Activated CD8-positive, alpha-beta T cell treated with anti-CD3 and anti-CD28 coated beads for 36 hours (primary cell): ENCODE measurements at regions of chr3 and their contacts with region 1.

Region 1: DNA sequence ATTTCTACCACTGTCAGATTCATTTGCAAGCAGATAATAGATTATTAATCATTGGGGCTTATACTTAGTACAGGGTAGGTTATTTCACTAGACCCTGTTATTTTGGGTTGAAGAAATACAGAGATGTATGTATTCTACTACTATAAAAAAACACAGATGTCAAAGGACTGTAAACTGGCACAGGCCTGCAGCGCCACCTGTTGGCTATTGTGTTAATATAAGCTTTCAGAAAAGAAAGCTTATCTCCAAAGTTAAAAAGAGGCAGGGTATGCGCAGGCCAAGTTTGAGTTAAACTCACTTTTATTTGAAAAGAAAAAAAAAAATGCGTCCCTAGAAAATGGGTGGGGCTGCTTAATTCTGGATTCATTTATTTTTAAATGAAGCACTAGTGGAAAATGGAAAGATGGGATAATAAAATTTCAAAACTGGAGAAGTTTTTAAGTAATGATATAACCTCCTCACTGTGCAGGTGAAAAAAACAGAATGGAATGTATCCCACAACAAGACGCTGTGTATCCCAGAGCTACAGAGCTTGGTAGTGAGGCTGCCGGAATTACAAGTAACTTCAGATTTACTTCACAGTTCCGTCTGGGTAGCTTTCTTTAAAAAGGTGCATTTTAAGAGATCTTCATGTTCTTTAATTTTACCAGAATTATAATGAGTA is 407.2 kb upstream of the TGFBR2 start:
- DNase-seq: peak; percentile 84
- ATAC-seq: no peak
- H3K4me3 Mint-ChIP-seq: no peak overlapping the region
- H3K27ac Mint-ChIP-seq: no peak overlapping the region
- H3K4me1 Mint-ChIP-seq: no peaks in the 10 kb centered on the region
- H3K27me3 Mint-ChIP-seq: no peaks in the 10 kb centered on the region
- CTCF ChIP-seq: peak; percentile 92

Region 2: DNA sequence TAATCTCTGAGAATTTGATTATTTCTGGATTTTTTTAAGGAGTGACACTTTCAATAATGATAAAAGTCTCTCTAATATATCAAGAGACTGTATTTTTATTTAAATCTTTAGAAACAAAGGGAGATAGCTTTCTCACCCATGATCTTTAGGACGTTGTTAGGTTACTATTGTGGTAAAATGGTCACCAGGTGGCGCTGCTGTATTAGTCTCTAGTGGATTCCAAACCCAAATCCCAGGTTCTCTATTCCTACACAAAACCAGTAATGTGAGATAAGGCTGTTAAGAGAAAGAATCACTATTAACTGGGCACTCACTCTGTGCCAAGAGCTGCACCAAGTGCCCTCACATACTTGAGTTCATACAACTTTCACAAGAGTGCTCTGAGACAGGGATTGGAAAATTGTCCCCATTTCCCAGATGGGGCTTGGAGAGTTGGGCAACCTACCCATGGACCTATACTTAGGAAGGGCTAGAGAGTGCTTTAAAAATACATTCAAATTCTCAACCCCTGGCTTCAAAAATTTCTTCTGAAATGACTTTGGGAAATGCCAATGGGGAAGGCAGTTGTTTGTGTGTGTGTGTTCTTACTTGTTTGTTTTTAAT is 186.2 kb before region 1 on chr3:
- CTCF ChIA-PET with region 1: interaction called, 34 read pairs
- POLR2A ChIA-PET with region 1: no interaction called
- intact Hi-C with region 1: loop called (anchors 10 kb)
- DNase-seq: peak; percentile 74
- ATAC-seq: no peak
- H3K4me3 Mint-ChIP-seq: no peak overlapping the region
- H3K27ac Mint-ChIP-seq: no peak overlapping the region
- H3K4me1 Mint-ChIP-seq: peaks cover 6% of the 10 kb centered on the region
- H3K27me3 Mint-ChIP-seq: peaks cover 9% of the 10 kb centered on the region
- CTCF ChIP-seq: peak; percentile 78

Region 3: GRCh38 chr3:30112902-30113484 is 86.2 kb before region 1 on chr3:
- CTCF ChIA-PET with region 1: interaction called, 24 read pairs
- POLR2A ChIA-PET with region 1: no interaction called
- intact Hi-C with region 1: loop called (anchors 2 kb)
- DNase-seq: no peak
- ATAC-seq: no peak
- H3K4me3 Mint-ChIP-seq: no peak overlapping the region
- H3K27ac Mint-ChIP-seq: no peak overlapping the region
- H3K4me1 Mint-ChIP-seq: peaks cover 3% of the 10 kb centered on the region
- H3K27me3 Mint-ChIP-seq: peaks cover 1% of the 10 kb centered on the region
- CTCF ChIP-seq: peak; percentile 46

Region 4: DNA sequence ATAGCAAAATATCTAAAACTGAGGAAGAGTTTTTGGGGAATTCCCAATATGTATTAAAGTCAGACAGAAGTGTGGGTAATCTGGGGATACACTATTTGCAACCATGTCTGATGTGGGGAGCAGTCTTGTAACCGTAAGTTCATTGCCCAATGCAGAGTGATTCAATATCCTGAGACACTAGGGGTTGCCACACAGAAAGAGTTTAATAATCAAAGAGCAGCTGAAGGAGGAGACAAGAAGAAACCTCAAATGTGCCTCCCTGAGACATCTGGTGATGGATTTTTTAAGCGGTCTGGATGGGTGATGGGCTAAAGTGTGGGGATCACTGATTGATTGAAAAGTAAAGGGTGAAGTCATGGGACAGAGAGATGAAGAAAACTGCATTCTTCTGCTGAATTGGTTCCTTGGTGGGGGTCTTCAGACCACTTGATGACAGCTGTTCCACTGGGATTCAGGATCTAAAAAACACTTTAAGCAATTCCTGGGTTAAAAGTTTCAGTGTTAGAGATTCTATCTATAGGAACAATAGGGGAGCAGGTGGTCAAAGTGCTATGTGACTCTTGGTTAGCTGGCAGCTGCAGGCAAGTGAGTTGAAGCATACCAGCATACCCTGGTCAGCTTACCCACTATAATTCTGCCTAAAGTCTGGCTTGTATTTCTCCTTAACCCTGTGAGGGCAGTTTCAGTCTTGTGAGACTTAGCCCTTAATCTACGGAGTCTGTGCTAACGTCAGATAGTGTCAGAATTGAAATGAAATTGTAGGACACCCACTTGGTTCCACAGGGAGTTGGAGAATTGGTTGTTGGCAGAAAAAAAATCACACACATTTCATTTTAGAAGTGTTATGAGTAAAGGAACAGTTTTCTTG is 18.7 kb before region 1 on chr3:
- CTCF ChIA-PET with region 1: interaction called, 32 read pairs
- POLR2A ChIA-PET with region 1: no interaction called
- intact Hi-C with region 1: no loop called
- DNase-seq: no peak
- ATAC-seq: no peak
- H3K4me3 Mint-ChIP-seq: no peak overlapping the region
- H3K27ac Mint-ChIP-seq: no peak overlapping the region
- H3K4me1 Mint-ChIP-seq: no peaks in the 10 kb centered on the region
- H3K27me3 Mint-ChIP-seq: peaks cover 4% of the 10 kb centered on the region
- CTCF ChIP-seq: no peak

Region 5: GRCh38 chr3:30221619-30222018 is 22.4 kb after region 1 on chr3:
- CTCF ChIA-PET with region 1: interaction called, 15 read pairs
- POLR2A ChIA-PET with region 1: no interaction called
- intact Hi-C with region 1: no loop called
- DNase-seq: no peak
- ATAC-seq: peak; percentile 42
- H3K4me3 Mint-ChIP-seq: no peak overlapping the region
- H3K27ac Mint-ChIP-seq: no peak overlapping the region
- H3K4me1 Mint-ChIP-seq: peaks cover 7% of the 10 kb centered on the region
- H3K27me3 Mint-ChIP-seq: no peaks in the 10 kb centered on the region
- CTCF ChIP-seq: no peak

Region 6: DNA sequence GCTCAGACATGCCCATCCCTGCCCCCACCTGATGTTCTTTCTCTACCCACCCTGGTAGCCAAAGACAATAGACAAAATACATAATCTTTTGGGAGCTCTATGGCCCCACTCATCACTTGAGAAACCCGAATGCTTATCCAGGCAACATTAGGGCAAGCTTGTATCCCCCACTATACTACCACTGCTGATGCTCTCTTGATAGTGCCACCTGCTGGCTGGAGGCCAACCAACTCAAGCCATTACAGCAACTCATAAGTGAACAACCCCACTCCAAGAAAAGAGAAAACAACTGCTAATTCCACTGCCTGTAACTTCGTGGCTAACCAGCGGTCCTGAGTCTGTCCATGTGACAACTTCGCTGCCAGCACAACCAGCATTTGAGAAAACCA is 64.7 kb after region 1 on chr3:
- CTCF ChIA-PET with region 1: interaction called, 15 read pairs
- POLR2A ChIA-PET with region 1: no interaction called
- intact Hi-C with region 1: no loop called
- DNase-seq: peak; percentile 40
- ATAC-seq: no peak
- H3K4me3 Mint-ChIP-seq: no peak overlapping the region
- H3K27ac Mint-ChIP-seq: peak overlapping the region; percentile 13
- H3K4me1 Mint-ChIP-seq: peaks cover 20% of the 10 kb centered on the region
- H3K27me3 Mint-ChIP-seq: no peaks in the 10 kb centered on the region
- CTCF ChIP-seq: peak; percentile 13

Region 7: GRCh38 chr3:30751610-30752299 is 552.5 kb after region 1 on chr3:
- CTCF ChIA-PET with region 1: interaction called, 32 read pairs
- POLR2A ChIA-PET with region 1: no interaction called
- intact Hi-C with region 1: loop called (anchors 5 kb)
- DNase-seq: peak; percentile 83
- ATAC-seq: peak; percentile 69
- H3K4me3 Mint-ChIP-seq: no peak overlapping the region
- H3K27ac Mint-ChIP-seq: peak overlapping the region; percentile 44
- H3K4me1 Mint-ChIP-seq: peaks cover 44% of the 10 kb centered on the region
- H3K27me3 Mint-ChIP-seq: peaks cover 2% of the 10 kb centered on the region
- CTCF ChIP-seq: peak; percentile 75